PC-9 (cell line): ENCODE measurements at regions of chr17 and their contacts with region 1.

Region 1: DNA sequence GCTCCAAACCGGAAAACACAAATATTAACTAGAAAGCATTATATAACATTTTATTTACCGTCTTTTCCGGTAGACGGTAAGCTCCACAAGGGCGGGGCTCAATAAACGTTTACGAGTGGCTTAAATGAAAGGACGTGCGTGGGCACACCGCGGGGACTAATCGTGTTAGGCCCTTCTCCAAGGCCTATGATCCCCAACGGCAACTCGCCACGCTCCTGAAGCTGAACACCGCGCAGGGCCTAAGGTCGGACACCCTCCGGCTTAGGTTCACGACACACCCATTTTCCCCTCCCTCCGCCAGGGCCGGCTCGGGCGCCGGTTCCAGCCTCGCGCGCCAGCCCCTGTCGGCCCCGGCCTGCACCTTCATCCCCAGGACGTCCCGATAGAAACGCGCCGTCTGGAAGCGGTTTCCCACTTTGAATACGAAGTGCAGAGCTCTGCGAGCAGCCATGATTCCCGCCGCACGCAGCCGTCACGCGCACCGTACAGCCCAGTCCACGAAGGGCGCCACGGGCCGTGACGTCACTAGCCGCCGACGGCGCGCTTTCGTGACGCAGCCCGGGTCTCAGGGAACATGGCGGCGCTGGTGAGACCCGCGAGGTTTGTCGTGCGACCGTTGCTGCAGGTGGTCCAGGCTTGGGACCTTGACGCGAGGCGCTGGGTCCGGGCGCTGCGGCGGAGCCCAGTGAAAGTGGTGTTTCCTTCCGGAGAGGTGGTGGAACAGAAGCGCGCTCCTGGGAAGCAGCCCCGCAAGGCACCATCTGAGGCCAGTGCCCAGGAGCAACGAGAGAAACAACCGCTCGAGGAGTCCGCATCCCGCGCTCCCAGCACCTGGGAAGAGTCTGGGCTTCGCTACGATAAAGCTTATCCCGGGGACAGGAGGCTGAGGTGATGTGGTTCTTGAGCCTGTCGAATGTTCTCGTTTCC is at the starts of genes GLOD4 and MRM3:
- DNase-seq: peak; percentile 67 to 90
- H3K4me3 ChIP-seq: peak within 1 kb of the TSS; percentile 92
- H3K27ac ChIP-seq: peak within 1 kb of the TSS; percentile 47
- H3K4me1 ChIP-seq: peaks cover 17% of the 10 kb centered on the region
- H3K27me3 ChIP-seq: no peaks in the 10 kb centered on the region
- CTCF ChIP-seq: 0 out of 2 replicates have a peak, but pooled peaks have one; percentile 16
- total RNA-seq, gene GLOD4: 110 and 123 TPM in 2 replicates
- total RNA-seq, gene MRM3: 23.2 and 25.0 TPM in 2 replicates

Region 2: GRCh38 chr17:871751-872519 is 89.9 kb after region 1 on chr17:
- CTCF ChIA-PET with region 1: no interaction called
- POLR2A ChIA-PET with region 1: interaction called, 20 read pairs
- intact Hi-C with region 1: no loop called
- DNase-seq: no peak
- H3K4me3 ChIP-seq: no peak overlapping the region
- H3K27ac ChIP-seq: no peak overlapping the region
- H3K4me1 ChIP-seq: no peaks in the 10 kb centered on the region
- H3K27me3 ChIP-seq: no peaks in the 10 kb centered on the region
- CTCF ChIP-seq: no peak

Region 3: GRCh38 chr17:1137465-1137894 is 355.4 kb after region 1 on chr17:
- CTCF ChIA-PET with region 1: no interaction called
- POLR2A ChIA-PET with region 1: no interaction called
- intact Hi-C with region 1: no loop called
- DNase-seq: no peak
- H3K4me3 ChIP-seq: no peak overlapping the region
- H3K27ac ChIP-seq: no peak overlapping the region
- H3K4me1 ChIP-seq: no peaks in the 10 kb centered on the region
- H3K27me3 ChIP-seq: no peaks in the 10 kb centered on the region
- CTCF ChIP-seq: no peak